Heart left ventricle (tissue), 16 donors: ENCODE measurements at regions of chr20 and their contacts with region 1.

Region 1: GRCh38 chr20:3051385-3052019 is 5.7 kb downstream of the MRPS26 start:
- DNase-seq: no peak
- ATAC-seq: no peak
- H3K4me3 ChIP-seq: no peak overlapping the region
- H3K27ac ChIP-seq: no peak overlapping the region
- H3K4me1 ChIP-seq: peaks cover 0 to 17% (median 11%) of the 10 kb centered on the region in 12 donors
- H3K27me3 ChIP-seq: no peaks in the 10 kb centered on the region
- CTCF ChIP-seq: no peak
- POLR2A ChIP-seq: no peak

Region 2: DNA sequence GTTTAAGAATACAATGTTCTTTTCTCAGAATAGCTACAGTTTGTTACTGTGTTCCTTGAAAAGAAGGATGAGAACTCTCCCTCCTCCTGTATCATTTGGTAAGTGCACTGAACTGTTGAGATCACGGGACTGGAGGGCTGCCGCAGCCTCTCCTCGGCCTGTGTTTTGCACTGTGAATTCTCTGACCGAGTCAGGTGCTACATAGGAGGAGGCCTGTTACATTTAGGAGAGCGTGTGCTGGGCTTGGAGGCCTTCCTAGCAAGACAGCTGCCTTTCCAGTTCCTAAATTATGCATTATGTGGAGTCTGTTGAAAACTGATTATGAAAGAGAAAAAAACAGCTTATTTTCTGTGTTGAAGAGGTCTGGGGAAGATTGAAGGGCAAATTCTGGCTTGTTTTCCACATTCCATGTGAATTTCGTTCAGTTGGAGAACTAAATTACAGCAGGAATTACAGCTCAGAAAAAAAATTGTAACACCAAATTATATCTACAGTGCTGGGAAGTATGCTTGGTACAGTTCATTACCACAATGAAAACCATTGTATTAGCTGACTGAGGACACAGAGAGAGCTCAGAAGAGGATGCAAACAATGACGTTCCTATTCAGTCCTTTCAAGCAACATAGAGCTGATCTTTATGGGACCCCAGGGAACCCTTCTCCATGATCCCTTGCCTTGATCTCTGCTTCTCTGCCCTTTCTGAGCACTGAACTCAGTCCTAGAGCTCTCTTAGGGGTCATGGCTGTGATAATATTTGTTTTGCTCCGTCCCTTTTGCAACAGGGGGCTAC is 512.4 kb before region 1 on chr20:
- intact Hi-C with region 1: no loop called
- DNase-seq: no peak
- ATAC-seq: no peak
- H3K4me3 ChIP-seq: no peak overlapping the region
- H3K27ac ChIP-seq: no peak overlapping the region
- H3K4me1 ChIP-seq: no peaks in the 10 kb centered on the region
- H3K27me3 ChIP-seq: peaks cover 0 to 57% (median 9%) of the 10 kb centered on the region in 9 donors
- CTCF ChIP-seq: no peak
- POLR2A ChIP-seq: no peak

Region 3: DNA sequence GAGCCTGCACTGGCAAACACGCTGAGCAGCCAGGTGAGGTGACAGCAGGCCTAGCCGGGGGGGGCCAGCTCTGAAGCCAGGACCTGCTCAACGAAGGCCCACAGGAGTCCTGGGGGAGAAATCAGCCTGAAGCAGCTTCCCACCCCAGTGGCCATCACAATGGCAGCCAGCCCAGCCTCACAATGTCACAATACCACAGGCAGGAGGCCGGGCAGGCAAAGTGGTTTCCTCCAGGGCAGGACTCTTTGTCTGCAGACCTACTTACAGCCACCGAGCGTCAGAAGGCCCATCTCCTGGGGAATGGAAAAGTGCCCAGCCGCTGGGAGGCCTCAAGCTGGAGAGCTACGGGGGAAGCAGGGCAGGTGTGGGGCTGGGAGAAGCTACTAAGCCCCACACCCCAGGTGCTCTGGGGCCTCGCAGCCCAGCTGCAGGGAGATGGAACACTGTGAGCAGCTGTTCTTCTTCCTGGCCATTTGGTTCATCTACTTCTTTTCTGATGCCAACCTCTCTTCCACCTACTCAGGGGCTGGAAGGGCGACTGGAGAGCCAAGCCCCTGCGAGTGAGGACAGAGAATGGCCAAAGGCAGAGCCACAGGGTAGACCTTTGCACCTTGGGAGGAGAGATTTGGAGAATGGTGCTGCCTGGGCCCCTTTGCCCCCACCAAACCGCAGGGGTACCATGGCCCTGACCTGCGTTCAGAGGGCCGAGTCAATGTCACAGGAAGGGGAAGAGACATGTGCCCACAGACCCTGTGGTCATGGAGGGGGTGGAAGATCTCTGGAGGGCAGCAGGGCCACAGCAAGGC is 55.4 kb after region 1 on chr20:
- intact Hi-C with region 1: loop called in 2 of 10 experiments (anchors 2 to 5 kb)
- DNase-seq: peak in 1 of 5 donors; percentile 37
- ATAC-seq: no peak
- H3K4me3 ChIP-seq: no peak overlapping the region
- H3K27ac ChIP-seq: no peak overlapping the region
- H3K4me1 ChIP-seq: no peaks in the 10 kb centered on the region
- H3K27me3 ChIP-seq: no peaks in the 10 kb centered on the region
- CTCF ChIP-seq: no peak
- POLR2A ChIP-seq: no peak

Region 4: DNA sequence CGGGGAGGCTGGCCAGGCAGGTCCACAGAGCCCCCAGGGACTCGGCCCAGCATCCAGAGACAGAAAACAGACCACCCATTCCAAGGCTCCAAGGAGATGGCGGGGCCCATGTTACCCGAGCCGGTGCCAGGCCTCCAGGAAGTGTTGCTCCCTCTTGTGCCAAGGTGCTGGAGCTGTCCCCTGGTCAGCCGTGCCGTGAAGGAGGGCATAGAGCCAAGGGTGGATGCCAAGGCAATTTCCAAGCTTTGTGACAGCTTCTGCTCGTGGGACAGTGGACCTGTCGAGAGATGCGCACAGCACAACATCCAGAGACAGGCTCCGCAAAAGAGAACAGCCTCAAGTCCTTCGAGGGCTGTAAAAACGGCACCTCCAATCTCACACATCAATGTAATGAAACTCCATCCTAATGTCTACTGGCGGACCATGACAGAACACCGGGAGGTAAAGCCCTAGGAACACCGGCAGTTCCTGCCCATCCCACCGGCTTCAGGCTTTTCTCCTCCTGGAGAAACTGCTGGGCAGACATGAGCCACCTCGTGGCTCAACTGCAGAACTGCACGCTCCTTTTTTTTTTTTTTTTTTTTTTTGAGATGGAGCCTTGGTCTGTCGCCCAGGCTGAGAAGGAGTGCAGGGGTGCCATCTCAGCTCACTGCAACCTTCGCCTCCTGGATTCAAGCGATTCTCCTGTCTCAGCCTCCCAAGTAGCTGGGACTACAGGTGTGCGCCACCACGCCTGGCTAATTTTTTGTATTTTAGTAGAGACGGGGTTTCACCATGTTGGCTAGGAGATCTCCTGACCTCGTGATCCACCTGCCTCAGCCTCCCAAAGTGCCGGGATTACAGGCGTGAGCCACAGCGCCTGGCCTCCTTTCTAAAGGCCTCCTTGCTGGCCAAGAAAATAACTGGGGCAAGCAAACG is 63.9 kb after region 1 on chr20:
- intact Hi-C with region 1: loop called in 9 of 10 experiments (anchors 2 to 5 kb)
- DNase-seq: peak in 1 of 5 donors; percentile 53
- ATAC-seq: peak in 3 of 4 donors; percentile 49 to 59 (median 50)
- H3K4me3 ChIP-seq: no peak overlapping the region
- H3K27ac ChIP-seq: no peak overlapping the region
- H3K4me1 ChIP-seq: peaks cover 0 to 10% (median 2%) of the 10 kb centered on the region in 12 donors
- H3K27me3 ChIP-seq: no peaks in the 10 kb centered on the region
- CTCF ChIP-seq: peak; percentile 64 to 83 (median 74)
- POLR2A ChIP-seq: no peak

Region 5: GRCh38 chr20:3204124-3204822 is 152.8 kb after region 1 on chr20 and contains the start of gene DDRGK1:
- intact Hi-C with region 1: loop called in 1 of 10 experiments (anchors 10 kb)
- DNase-seq: peak; percentile 84 to 92 (median 87)
- ATAC-seq: peak; percentile 89 to 97 (median 96)
- H3K4me3 ChIP-seq: peak within 1 kb of the TSS; percentile 53 to 97 (median 81)
- H3K27ac ChIP-seq: peak within 1 kb of the TSS; percentile 77 to 91 (median 85)
- H3K4me1 ChIP-seq: peaks cover 0 to 23% (median 12%) of the 10 kb centered on the region in 12 donors
- H3K27me3 ChIP-seq: no peaks in the 10 kb centered on the region
- CTCF ChIP-seq: no peak
- POLR2A ChIP-seq: peak in 1 of 2 donors; percentile 72
- total RNA-seq, gene DDRGK1: 26.0 to 55.5 (median 35.5) TPM

Region 6: DNA sequence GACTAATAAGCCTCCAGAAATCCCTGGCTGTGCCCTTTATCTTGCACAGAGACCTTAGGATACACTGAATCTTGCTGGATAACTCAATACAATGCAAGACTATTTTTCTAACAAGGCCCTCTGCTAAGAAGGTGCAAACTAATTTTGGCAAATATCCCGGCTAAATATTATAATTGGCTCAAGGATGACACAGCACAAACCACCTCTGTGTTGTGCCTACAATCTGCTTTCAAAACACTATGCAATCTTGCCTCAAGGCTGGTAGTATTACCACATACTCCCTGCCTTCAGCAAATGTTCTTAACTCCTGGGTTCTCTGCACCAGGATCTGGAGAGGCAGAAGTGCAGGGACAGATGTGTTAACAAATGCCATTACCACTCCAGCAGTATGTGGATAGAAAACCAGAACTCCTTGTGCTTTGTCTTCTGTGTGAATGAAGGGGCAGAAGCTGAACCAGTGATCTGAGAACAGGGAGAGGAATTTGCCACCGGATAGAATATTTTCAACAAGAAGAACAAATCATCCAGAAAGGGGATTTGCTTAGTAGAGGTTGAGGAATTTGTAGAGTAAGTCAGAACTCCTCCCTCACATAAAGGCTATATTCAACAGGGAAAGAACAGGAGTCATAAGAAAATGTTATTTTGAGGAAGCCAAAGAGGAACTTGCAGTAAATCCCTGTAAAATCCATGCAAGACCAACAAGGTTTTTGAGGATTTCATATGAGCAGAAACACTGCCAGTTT is 261.6 kb after region 1 on chr20:
- intact Hi-C with region 1: loop called in 2 of 10 experiments (anchors 5 to 10 kb)
- DNase-seq: no peak
- ATAC-seq: peak; percentile 38 to 80 (median 65)
- H3K4me3 ChIP-seq: no peak overlapping the region
- H3K27ac ChIP-seq: peak overlapping the region in 11 of 12 donors; percentile 26 to 80 (median 51)
- H3K4me1 ChIP-seq: peaks cover 0 to 45% (median 37%) of the 10 kb centered on the region in 12 donors
- H3K27me3 ChIP-seq: no peaks in the 10 kb centered on the region
- CTCF ChIP-seq: no peak
- POLR2A ChIP-seq: no peak

Region 7: GRCh38 chr20:3323398-3323797 is 271.9 kb after region 1 on chr20:
- intact Hi-C with region 1: loop called in 3 of 10 experiments (anchors 5 to 10 kb)
- DNase-seq: no peak
- ATAC-seq: no peak
- H3K4me3 ChIP-seq: no peak overlapping the region
- H3K27ac ChIP-seq: no peak overlapping the region
- H3K4me1 ChIP-seq: peaks cover 0 to 19% (median 2%) of the 10 kb centered on the region in 12 donors
- H3K27me3 ChIP-seq: no peaks in the 10 kb centered on the region
- CTCF ChIP-seq: no peak
- POLR2A ChIP-seq: no peak